SK-N-SH (cell line): ENCODE measurements at regions of chr19 and their contacts with region 1.

Region 1: DNA sequence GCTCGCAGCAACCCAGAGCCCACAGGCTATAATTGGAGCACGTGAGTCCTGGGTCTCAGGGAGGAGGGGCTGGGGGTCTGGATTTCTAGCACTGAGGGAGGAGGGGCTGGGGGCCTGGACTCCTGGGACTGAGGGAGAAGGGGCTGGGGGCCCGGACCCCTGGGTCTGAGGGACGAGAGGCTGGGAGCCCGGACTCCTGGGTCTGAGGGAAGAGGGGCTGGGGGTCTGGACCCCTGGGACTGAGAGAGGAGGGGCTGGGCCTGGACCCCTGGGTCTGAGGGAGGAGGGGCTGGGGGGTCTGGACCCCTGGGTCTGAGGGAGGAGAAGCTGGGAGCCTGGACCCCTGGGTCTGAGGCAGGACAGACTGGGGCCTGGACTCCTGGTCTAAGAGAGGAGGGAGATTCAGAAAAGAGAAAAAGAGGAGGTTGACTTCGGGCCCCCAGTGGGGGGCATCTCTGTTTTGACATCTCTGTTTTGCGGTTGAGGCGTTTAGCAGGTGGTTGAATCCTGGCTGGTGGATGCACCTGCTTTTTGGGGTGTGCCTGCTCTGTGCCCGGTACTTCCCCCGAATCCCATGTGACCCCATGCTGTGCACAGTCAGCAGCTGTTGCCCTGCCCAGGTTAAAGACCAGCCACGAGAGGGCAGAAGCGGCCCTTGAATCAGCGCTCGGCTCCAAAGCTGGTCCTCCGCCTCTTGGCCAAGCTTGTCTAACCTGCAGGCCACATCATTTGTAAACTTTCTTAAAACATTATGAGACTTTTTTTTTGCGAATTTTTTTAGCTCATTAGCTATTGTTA is 10.5 kb downstream of the PVR start:
- DNase-seq: no peak
- H3K4me3 ChIP-seq: no peak overlapping the region
- H3K27ac ChIP-seq: no peak overlapping the region
- H3K4me1 ChIP-seq: no peaks in the 10 kb centered on the region
- H3K27me3 ChIP-seq: no peaks in the 10 kb centered on the region
- CTCF ChIP-seq: no peak; the same call in 1 of the 2 replicates
- EP300 ChIP-seq: no peak
- RAD21 ChIP-seq: 0 out of 2 replicates have a peak, but pooled peaks have one; percentile 3

Region 2: DNA sequence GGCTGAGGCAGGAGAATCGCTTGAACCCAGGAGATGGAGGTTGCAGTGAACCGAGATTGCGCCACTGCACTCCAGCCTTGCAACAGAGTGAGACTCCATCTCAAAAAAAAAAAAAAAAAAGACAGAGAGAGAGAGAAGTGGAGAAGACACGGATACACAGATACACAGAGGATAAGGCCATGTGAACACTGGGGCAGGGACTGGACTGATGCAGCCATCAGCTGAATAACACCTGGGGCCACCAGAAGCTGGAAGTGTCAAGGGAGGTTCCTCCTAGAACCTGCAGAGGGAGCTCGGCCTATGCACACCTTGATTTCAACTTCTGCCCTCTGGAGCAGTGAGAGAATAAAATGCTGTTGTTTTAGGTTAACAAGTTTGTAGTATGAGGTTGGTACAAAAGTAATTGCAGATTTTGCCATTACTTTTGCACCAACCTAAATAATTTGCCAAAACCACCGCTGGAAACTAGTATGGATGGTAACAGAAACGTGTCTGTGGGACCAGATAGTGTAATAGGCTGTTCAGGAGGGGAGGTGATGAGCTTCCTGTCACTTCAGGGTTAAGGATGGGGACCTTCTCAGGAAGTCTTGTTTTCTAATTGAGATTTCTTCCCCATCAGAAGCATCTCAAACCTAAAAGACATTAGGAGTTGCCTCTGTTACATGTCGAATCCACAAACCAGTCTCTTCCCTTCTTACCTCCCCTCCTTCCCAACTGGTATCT is 77.2 kb before region 1 on chr19:
- CTCF ChIA-PET with region 1: interaction called, 148 read pairs
- POLR2A ChIA-PET with region 1: no interaction called
- DNase-seq: peak; percentile 32
- H3K4me3 ChIP-seq: no peak overlapping the region; a peak in 1 of 4 replicates
- H3K27ac ChIP-seq: no peak overlapping the region
- H3K4me1 ChIP-seq: no peaks in the 10 kb centered on the region
- H3K27me3 ChIP-seq: no peaks in the 10 kb centered on the region
- CTCF ChIP-seq: peak; percentile 68
- EP300 ChIP-seq: no peak
- RAD21 ChIP-seq: peak; percentile 65

Region 3: GRCh38 chr19:44582581-44583265 is 71.5 kb before region 1 on chr19:
- CTCF ChIA-PET with region 1: interaction called, 16 read pairs
- POLR2A ChIA-PET with region 1: no interaction called
- DNase-seq: peak; percentile 46
- H3K4me3 ChIP-seq: no peak overlapping the region
- H3K27ac ChIP-seq: no peak overlapping the region
- H3K4me1 ChIP-seq: peaks cover 0 to 14% of the 10 kb centered on the region in 2 experiments; a peak in 1 of 4 replicates
- H3K27me3 ChIP-seq: no peaks in the 10 kb centered on the region
- CTCF ChIP-seq: peak; percentile 60
- EP300 ChIP-seq: no peak
- RAD21 ChIP-seq: peak; percentile 45

Region 4: GRCh38 chr19:44643605-44644401 is 10.4 kb before region 1 on chr19 and contains the start of gene PVR:
- CTCF ChIA-PET with region 1: interaction called, 18 read pairs
- POLR2A ChIA-PET with region 1: no interaction called
- DNase-seq: peak; percentile 95
- H3K4me3 ChIP-seq: peak within 1 kb of the TSS; percentile 66 to 88
- H3K27ac ChIP-seq: peak within 1 kb of the TSS; percentile 82 to 83
- H3K4me1 ChIP-seq: peaks cover 0 to 2% of the 10 kb centered on the region in 2 experiments; a peak in 1 of 4 replicates
- H3K27me3 ChIP-seq: no peaks in the 10 kb centered on the region
- CTCF ChIP-seq: no peak; the same call in 1 of the 2 replicates
- EP300 ChIP-seq: no peak
- RAD21 ChIP-seq: no peak
- polyA plus RNA-seq, gene PVR: 90.2 and 90.8 TPM in 2 replicates

Region 5: GRCh38 chr19:44808463-44809371 is 154.5 kb after region 1 on chr19 and contains the start of gene BCAM:
- CTCF ChIA-PET with region 1: no interaction called
- POLR2A ChIA-PET with region 1: no interaction called
- DNase-seq: peak; percentile 97
- H3K4me3 ChIP-seq: peak within 1 kb of the TSS; percentile 51 to 66
- H3K27ac ChIP-seq: no peak within 1 kb of the TSS
- H3K4me1 ChIP-seq: peaks cover 8 to 13% of the 10 kb centered on the region in 2 experiments; a peak in 2 of 4 replicates
- H3K27me3 ChIP-seq: peaks cover 34% of the 10 kb centered on the region
- CTCF ChIP-seq: no peak
- EP300 ChIP-seq: no peak
- RAD21 ChIP-seq: no peak
- polyA plus RNA-seq, gene BCAM: 9.7 and 34.0 TPM in 2 replicates